Endothelial cell of umbilical vein (primary cell): ENCODE measurements at regions of chr2 and their contacts with region 1.

Region 1: GRCh38 chr2:217166241-217166850 is 306.5 kb upstream of the TNP1 start:
- DNase-seq: peak; percentile 58
- H3K4me3 ChIP-seq: no peak overlapping the region
- H3K27ac ChIP-seq: no peak overlapping the region
- H3K4me1 ChIP-seq: peaks cover 2% of the 10 kb centered on the region
- H3K27me3 ChIP-seq: peaks cover 0 to under 1% of the 10 kb centered on the region in 2 experiments
- CTCF ChIP-seq: peak; percentile 33 to 55
- POLR2A ChIP-seq: no peak

Region 2: DNA sequence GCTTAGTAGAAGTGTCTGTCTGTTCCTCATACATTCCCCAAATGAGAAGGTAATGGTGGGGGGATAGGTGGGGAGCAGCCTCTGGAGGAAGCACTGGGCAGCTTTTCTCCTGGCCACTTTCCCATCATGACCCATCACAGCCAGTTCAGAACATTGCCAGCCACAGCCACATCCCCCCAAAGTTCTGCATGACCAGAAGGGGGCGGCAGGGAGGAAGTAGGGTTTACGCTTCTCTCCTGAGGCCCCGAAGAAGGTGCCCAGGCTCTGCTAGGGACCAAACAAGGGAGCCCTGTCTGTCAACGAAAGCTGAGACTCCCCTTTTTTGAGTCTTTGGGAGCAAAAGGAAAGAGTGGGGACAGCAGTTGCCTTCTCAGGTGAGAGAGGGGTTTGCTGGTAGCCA is 478.7 kb before region 1 on chr2:
- CTCF ChIA-PET with region 1: interaction called, 20 read pairs
- POLR2A ChIA-PET with region 1: no interaction called
- dilution Hi-C with region 1: no loop called
- intact Hi-C with region 1: loop called (anchors 1 kb)
- DNase-seq: no peak
- H3K4me3 ChIP-seq: no peak overlapping the region
- H3K27ac ChIP-seq: no peak overlapping the region
- H3K4me1 ChIP-seq: peaks cover 10% of the 10 kb centered on the region
- H3K27me3 ChIP-seq: peaks cover 33 to 41% of the 10 kb centered on the region in 2 experiments
- CTCF ChIP-seq: peak; percentile 25 to 44
- POLR2A ChIP-seq: no peak

Region 3: GRCh38 chr2:216877084-216877483 is 289.3 kb before region 1 on chr2:
- CTCF ChIA-PET with region 1: interaction called, 12 read pairs
- POLR2A ChIA-PET with region 1: no interaction called
- dilution Hi-C with region 1: no loop called
- intact Hi-C with region 1: loop called (anchors 1 kb)
- DNase-seq: peak; percentile 4
- H3K4me3 ChIP-seq: no peak overlapping the region
- H3K27ac ChIP-seq: no peak overlapping the region
- H3K4me1 ChIP-seq: no peaks in the 10 kb centered on the region
- H3K27me3 ChIP-seq: no peaks in the 10 kb centered on the region
- CTCF ChIP-seq: peak; percentile 4 to 21
- POLR2A ChIP-seq: no peak

Region 4: DNA sequence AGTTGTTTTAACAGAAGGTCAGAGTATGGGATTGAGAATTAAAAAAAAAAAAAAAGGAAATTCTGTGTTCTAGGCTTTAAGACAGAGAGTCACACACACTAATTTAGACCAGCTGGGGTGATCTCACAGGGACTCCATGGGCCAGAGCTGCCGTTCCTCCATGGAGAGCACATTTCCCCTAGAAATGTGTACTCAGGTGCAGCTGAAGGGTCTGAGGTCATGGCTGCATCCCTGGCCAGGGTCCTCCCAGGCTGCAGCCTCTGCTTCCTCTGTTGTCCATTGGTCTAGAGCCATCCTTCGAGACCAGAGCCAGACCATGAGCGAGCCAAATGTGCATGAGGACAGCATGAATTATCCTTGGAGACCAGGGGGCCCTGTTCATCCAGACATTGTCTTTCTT is 116.4 kb before region 1 on chr2:
- CTCF ChIA-PET with region 1: interaction called, 22 read pairs
- POLR2A ChIA-PET with region 1: no interaction called
- dilution Hi-C with region 1: no loop called
- intact Hi-C with region 1: no loop called
- DNase-seq: no peak
- H3K4me3 ChIP-seq: no peak overlapping the region
- H3K27ac ChIP-seq: no peak overlapping the region
- H3K4me1 ChIP-seq: peaks cover 7% of the 10 kb centered on the region
- H3K27me3 ChIP-seq: no peaks in the 10 kb centered on the region
- CTCF ChIP-seq: no peak
- POLR2A ChIP-seq: no peak

Region 5: DNA sequence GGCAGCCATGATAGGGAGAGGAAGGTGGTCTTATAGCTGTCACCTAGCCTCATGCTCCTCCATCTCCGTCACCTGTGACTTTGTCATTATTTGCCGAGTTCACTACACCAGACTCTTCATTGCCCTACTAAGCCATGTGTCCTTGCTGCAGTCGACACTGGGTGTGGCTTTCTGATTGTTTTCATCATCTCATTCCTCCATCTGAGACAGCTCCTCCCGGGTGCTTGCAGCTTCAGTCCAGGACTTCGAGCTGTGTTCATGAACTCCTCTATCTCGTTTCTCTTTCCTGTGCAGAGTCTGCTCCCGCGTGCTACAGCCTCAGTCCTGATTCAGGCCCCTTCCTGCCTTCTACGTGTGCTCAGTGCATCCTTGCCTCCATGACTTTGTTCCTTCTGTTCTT is 11.4 kb before region 1 on chr2:
- CTCF ChIA-PET with region 1: interaction called, 20 read pairs
- POLR2A ChIA-PET with region 1: no interaction called
- dilution Hi-C with region 1: no loop called
- intact Hi-C with region 1: no loop called
- DNase-seq: no peak
- H3K4me3 ChIP-seq: no peak overlapping the region
- H3K27ac ChIP-seq: no peak overlapping the region
- H3K4me1 ChIP-seq: no peaks in the 10 kb centered on the region
- H3K27me3 ChIP-seq: peaks cover 14 to 23% of the 10 kb centered on the region in 2 experiments
- CTCF ChIP-seq: no peak
- POLR2A ChIP-seq: no peak

Region 6: GRCh38 chr2:217510771-217511291 is 344.5 kb after region 1 on chr2:
- CTCF ChIA-PET with region 1: interaction called, 13 read pairs
- POLR2A ChIA-PET with region 1: no interaction called
- dilution Hi-C with region 1: no loop called
- intact Hi-C with region 1: loop called (anchors 1 kb)
- DNase-seq: peak; percentile 74
- H3K4me3 ChIP-seq: no peak overlapping the region
- H3K27ac ChIP-seq: no peak overlapping the region
- H3K4me1 ChIP-seq: no peaks in the 10 kb centered on the region
- H3K27me3 ChIP-seq: no peaks in the 10 kb centered on the region
- CTCF ChIP-seq: peak; percentile 64 to 65
- POLR2A ChIP-seq: no peak